ENCODE measurements at regions of chr5 and their contacts with region 1.

Region 1: DNA sequence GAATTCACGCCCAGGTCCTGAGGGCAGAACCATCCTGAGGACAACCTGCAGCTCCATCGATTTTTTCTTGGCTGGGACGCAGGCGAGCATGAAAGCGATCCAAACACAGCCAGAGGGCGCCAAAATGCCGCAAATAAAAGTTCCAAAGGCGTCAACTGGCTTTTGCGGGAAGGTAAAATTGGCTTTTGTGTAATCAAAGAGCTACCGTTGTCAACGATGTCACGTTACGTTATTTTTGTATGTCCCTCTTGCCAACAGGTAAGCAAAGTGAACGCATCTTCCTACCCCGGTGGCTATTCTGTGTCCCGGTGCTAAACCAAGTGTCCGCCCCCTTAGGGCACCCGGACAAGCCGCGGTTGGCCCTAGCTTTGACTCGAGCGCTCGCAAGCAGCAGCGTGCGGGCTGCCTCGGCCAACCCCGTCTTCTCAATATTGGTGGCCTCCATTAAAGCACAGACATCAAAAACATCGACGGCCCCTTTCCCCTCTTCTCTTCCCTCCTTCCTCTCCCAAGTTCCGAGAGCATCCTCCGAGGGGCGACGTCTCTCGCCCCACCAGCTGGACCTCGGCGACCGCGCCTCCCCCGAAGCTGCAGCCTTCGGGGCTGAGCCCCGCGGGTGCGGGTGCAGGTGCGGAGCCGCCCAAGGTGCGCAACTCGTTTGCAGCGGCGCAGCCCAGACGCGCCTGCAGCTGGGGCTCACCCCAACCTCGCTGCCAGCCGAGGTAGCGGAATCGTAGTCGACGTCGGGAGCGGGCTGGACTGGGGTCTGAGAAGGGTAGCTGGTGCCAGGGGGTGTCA is 1.1 kb upstream of the BASP1 start:
- DNase-seq: peak; percentile 69
- ATAC-seq: peak; percentile 41
- H3K4me3 Mint-ChIP-seq: peak overlapping the region; percentile 94
- H3K27ac Mint-ChIP-seq: peak overlapping the region; percentile 97
- H3K4me1 Mint-ChIP-seq: peaks cover 59% of the 10 kb centered on the region
- H3K27me3 Mint-ChIP-seq: no peaks in the 10 kb centered on the region
- CTCF ChIP-seq: peak; percentile 65

Region 2: DNA sequence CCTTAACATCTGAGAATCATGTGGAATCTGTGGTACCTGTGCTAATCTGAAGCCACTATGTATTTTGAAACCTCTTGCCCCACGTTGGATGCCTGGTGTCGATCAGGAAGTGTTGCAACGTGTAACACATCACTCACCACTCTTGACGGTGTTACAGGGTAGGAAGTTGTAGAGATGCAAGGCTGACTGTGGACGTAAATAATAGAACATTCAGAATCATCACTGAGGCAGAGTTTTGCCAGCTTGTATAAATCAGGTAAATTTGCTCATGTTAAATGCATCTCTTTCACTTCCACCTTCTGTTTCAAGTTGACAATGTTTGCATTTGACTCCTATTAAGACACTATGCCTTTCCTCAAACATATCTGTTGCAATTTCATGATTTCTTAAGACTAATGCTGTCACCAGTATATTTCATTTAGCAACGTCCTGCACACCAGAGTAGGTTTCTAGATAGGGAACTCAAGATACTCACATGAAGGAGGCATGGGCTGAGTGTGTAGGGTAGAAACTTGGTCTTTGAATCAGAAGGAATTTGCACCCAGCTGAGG is 39.2 kb after region 1 on chr5:
- CTCF ChIA-PET with region 1: interaction called, 22 read pairs
- POLR2A ChIA-PET with region 1: interaction called, 90 read pairs
- intact Hi-C with region 1: loop called (anchors 1 kb)
- DNase-seq: no peak
- ATAC-seq: peak; percentile 43
- H3K4me3 Mint-ChIP-seq: peak overlapping the region; percentile 44
- H3K27ac Mint-ChIP-seq: peak overlapping the region; percentile 95
- H3K4me1 Mint-ChIP-seq: peaks cover 93% of the 10 kb centered on the region
- H3K27me3 Mint-ChIP-seq: no peaks in the 10 kb centered on the region
- CTCF ChIP-seq: no peak

Region 3: GRCh38 chr5:17359451-17360011 is 143.2 kb after region 1 on chr5:
- CTCF ChIA-PET with region 1: interaction called, 7 read pairs
- POLR2A ChIA-PET with region 1: interaction called, 13 read pairs
- intact Hi-C with region 1: loop called (anchors 2 kb)
- DNase-seq: no peak
- ATAC-seq: no peak
- H3K4me3 Mint-ChIP-seq: no peak overlapping the region
- H3K27ac Mint-ChIP-seq: no peak overlapping the region
- H3K4me1 Mint-ChIP-seq: peaks cover 18% of the 10 kb centered on the region
- H3K27me3 Mint-ChIP-seq: no peaks in the 10 kb centered on the region
- CTCF ChIP-seq: no peak

Region 4: DNA sequence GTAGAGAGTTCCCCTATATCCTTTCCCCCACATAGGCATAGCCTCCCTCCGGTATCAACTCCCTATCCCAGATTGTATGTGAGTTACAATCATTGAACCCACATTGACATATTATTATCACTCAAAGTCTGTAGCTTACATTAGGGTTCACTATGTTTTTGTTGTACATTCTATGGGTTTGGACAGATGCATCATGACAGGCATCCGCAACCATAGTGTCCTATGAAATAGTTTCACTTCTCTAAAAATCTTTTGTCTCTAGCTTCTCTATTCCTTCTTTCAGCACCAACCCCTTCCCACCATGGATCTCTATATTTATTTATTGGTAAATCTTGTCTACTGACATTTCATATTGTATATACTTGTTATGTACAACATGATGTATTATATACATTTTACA is 449.5 kb after region 1 on chr5:
- CTCF ChIA-PET with region 1: no interaction called
- POLR2A ChIA-PET with region 1: interaction called, 7 read pairs
- intact Hi-C with region 1: loop called (anchors 2 kb)
- DNase-seq: no peak
- ATAC-seq: peak; percentile 31
- H3K4me3 Mint-ChIP-seq: no peak overlapping the region
- H3K27ac Mint-ChIP-seq: no peak overlapping the region
- H3K4me1 Mint-ChIP-seq: peaks cover 25% of the 10 kb centered on the region
- H3K27me3 Mint-ChIP-seq: no peaks in the 10 kb centered on the region
- CTCF ChIP-seq: no peak

Region 5: GRCh38 chr5:18010053-18010452 is 793.7 kb after region 1 on chr5:
- CTCF ChIA-PET with region 1: no interaction called
- POLR2A ChIA-PET with region 1: no interaction called
- intact Hi-C with region 1: loop called (anchors 10 kb)
- DNase-seq: no peak
- ATAC-seq: no peak
- H3K4me3 Mint-ChIP-seq: no peak overlapping the region
- H3K27ac Mint-ChIP-seq: no peak overlapping the region
- H3K4me1 Mint-ChIP-seq: no peaks in the 10 kb centered on the region
- H3K27me3 Mint-ChIP-seq: no peaks in the 10 kb centered on the region
- CTCF ChIP-seq: no peak

Region 6: DNA sequence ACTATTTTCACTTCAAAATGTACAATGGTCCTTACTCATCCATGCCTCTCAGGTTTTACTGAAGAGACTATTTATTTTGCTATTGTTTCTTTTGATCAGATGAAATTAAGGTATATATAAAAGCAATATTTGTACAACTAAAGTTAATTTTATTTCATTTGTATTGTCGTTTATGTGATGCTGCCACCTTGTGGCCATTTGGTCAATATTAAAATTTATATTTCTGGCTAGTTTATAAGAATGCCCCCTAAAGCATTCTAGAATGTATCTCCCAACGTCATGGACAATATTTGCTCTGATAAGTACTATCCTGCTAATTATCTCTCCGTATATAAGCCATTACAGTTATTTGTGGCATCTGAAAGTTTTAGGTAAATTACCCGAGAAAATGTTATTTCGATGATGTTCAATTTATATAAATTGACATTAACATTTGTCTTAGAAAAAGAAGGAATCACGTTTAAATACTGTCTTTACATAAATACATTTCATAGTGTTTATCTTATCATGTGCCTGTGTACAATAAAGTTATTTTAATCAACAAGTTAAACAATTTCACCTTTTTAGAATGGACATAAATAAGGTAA is 1097.9 kb after region 1 on chr5:
- CTCF ChIA-PET with region 1: interaction called, 34 read pairs
- POLR2A ChIA-PET with region 1: interaction called, 8 read pairs
- intact Hi-C with region 1: loop called (anchors 1 kb)
- DNase-seq: no peak
- ATAC-seq: no peak
- H3K4me3 Mint-ChIP-seq: no peak overlapping the region
- H3K27ac Mint-ChIP-seq: no peak overlapping the region
- H3K4me1 Mint-ChIP-seq: no peaks in the 10 kb centered on the region
- H3K27me3 Mint-ChIP-seq: no peaks in the 10 kb centered on the region
- CTCF ChIP-seq: no peak